ENCODE measurements at regions of chr2 and their contacts with region 1.

Region 1: DNA sequence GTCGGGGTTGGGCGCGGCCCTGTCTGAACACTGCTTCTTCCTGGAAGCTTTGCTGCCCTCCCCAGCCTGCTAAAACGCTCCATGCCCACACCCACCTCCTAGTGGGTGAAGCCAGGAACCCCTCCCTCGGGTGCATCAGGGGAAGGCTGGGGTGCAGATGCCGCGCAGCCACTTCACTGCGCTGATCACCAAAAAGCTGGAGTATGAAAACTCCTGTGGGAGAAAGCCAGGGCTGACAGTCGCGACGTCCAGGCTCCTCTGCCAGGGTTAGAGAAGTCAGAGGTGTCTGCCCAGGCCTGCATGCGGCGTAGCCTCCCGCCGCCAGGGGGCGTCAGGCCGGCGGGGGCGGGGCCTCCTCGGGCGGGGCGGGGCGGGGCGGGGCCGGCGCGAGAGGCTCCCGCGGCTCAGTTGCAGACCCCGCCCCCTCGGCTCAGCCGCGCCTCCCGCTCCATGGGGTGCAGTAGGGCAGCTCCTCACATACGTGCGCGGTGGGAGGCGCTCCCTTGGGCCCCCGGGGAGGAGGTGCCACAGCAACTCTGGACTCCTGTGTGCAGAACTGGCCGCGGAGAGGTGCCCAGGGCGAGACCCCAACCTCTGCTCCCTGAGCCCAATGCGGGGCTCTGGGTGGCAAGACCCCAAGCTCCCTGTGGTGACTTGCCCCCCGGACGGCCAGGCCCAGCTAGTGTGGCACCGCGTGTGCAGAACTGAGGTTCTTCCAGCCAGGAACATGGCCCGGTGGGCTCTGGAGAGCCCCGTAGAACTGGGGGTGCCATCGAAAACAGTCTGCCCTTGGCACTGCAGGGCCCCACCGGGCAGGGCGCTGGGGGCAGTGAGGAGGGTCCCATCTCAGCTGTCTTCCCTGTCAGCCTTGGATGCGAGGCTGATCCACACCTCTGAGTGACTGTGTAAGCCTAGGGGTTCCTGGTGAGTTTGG is 1.8 kb upstream of the RNPEPL1 start:
- DNase-seq: peak; percentile 90 to 91
- H3K4me3 ChIP-seq: peak overlapping the region; percentile 69 to 83 (median 71)
- H3K27ac ChIP-seq: peak overlapping the region; percentile 93 to 100
- H3K4me1 ChIP-seq: peaks cover 14 to 31% of the 10 kb centered on the region in 2 donors
- H3K27me3 ChIP-seq: no peaks in the 10 kb centered on the region
- CTCF ChIP-seq: peak; percentile 28 to 75 (median 65)
- POLR2A ChIP-seq: no peak

Region 2: GRCh38 chr2:238596571-238597551 is 1969.6 kb before region 1 on chr2:
- intact Hi-C with region 1: loop called (anchors 5 kb)
- DNase-seq: peak in 1 of 2 donors; percentile 87
- H3K4me3 ChIP-seq: peak overlapping the region in 1 of 3 donors; percentile 15
- H3K27ac ChIP-seq: peak overlapping the region; percentile 82 to 90
- H3K4me1 ChIP-seq: peaks cover 7 to 9% of the 10 kb centered on the region in 2 donors
- H3K27me3 ChIP-seq: no peaks in the 10 kb centered on the region
- CTCF ChIP-seq: no peak
- POLR2A ChIP-seq: no peak

Region 3: GRCh38 chr2:240584486-240585051 is 18.1 kb after region 1 on chr2:
- intact Hi-C with region 1: loop called (anchors 1 kb)
- DNase-seq: no peak
- H3K4me3 ChIP-seq: peak overlapping the region in 2 of 3 donors; percentile 87 to 97
- H3K27ac ChIP-seq: peak overlapping the region in 1 of 2 donors; percentile 9
- H3K4me1 ChIP-seq: peaks cover 24 to 27% of the 10 kb centered on the region in 2 donors
- H3K27me3 ChIP-seq: no peaks in the 10 kb centered on the region
- CTCF ChIP-seq: no peak
- POLR2A ChIP-seq: no peak